Heart right ventricle (tissue), 16 donors: ENCODE measurements at regions of chr2 and their contacts with region 1.

Region 1: GRCh38 chr2:95402370-95403203 is at the start of gene FAHD2A:
- DNase-seq: peak; percentile 97 to 98
- ATAC-seq: peak; percentile 97 to 99 (median 98)
- H3K4me3 ChIP-seq: peak within 1 kb of the TSS; percentile 71 to 99 (median 93)
- H3K27ac ChIP-seq: peak within 1 kb of the TSS in 9 of 10 donors; percentile 76 to 94 (median 86)
- H3K4me1 ChIP-seq: peaks cover 0 to 31% (median 19%) of the 10 kb centered on the region in 9 donors
- H3K27me3 ChIP-seq: no peaks in the 10 kb centered on the region
- CTCF ChIP-seq: no peak
- total RNA-seq, gene FAHD2A: 24.1 to 45.1 (median 39.8) TPM

Region 2: DNA sequence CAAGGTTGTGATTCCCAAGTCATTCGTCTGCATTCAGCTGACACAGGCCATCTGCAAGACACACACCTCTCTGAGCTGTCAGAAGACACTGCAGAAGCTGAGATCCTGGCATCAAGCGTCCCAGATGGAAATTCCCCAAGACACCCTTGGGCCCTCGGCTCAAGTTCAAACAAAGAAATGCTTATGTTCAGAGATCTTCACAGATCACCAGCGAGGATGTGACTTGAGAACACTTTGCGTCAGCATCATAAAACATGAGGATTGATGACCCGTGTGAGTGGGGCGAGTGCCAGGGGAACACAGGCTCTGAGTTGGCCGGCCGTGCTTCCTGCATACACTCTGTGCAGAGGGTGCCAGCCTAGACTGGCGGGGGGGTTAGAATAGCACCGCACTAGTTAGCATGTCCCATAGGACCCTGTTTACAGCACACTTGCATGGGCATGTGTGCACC is 68.7 kb before region 1 on chr2:
- intact Hi-C with region 1: no loop called
- DNase-seq: peak in 1 of 2 donors; percentile 9
- ATAC-seq: no peak
- H3K4me3 ChIP-seq: no peak overlapping the region
- H3K27ac ChIP-seq: no peak overlapping the region
- H3K4me1 ChIP-seq: peaks cover 0 to 6% (median 0%) of the 10 kb centered on the region in 9 donors
- H3K27me3 ChIP-seq: peaks cover 0 to 9% (median 0%) of the 10 kb centered on the region in 7 donors
- CTCF ChIP-seq: no peak

Region 3: DNA sequence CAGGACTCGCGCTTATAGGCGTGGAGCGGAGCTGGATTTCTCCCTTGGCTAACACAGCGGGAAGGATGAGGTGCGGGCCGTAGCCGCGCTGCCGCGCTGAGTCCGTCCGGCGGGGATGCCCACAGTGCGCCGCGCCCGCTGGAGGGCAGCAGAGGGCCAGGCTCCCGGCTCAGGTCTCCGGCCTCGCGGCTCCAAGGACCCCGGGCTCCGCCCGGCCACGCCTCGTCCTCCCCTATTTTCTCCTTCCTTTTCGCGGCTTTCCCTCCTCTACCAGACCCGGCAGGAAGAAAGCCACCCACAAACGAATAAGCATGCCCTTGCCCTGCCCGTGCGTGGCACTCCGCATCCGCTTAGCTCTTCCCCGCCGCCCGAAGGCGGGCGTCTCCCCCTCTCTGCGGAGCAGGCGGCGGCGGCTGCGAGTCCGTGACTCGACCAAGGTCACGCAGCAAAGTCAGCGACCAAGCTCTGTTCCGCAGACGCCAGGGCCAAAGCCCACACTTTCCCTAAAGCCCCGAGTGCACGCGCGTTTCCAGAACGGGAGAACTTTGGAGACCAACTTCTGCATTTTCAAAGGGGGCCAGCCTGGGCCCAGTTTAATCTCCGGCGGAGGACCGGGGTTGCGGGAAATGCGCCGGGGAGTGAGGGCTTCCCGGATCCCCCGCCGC is 56.9 kb before region 1 on chr2:
- intact Hi-C with region 1: loop called in 2 of 10 experiments (anchors 5 kb)
- DNase-seq: peak; percentile 76 to 90
- ATAC-seq: peak; percentile 90 to 95 (median 92)
- H3K4me3 ChIP-seq: peak overlapping the region; percentile 46 to 77 (median 66)
- H3K27ac ChIP-seq: peak overlapping the region; percentile 60 to 88 (median 78)
- H3K4me1 ChIP-seq: peaks cover 0 to 23% (median 11%) of the 10 kb centered on the region in 9 donors
- H3K27me3 ChIP-seq: peaks cover 0 to 61% (median 17%) of the 10 kb centered on the region in 7 donors
- CTCF ChIP-seq: peak; percentile 83 to 96 (median 93)

Region 4: GRCh38 chr2:95353613-95354468 is 48.7 kb before region 1 on chr2:
- intact Hi-C with region 1: loop called in 2 of 10 experiments (anchors 5 kb)
- DNase-seq: no peak
- ATAC-seq: no peak
- H3K4me3 ChIP-seq: no peak overlapping the region
- H3K27ac ChIP-seq: no peak overlapping the region
- H3K4me1 ChIP-seq: no peaks in the 10 kb centered on the region
- H3K27me3 ChIP-seq: peaks cover 0 to 3% (median 0%) of the 10 kb centered on the region in 7 donors
- CTCF ChIP-seq: no peak

Region 5: GRCh38 chr2:95728878-95729596 is 326.4 kb after region 1 on chr2:
- intact Hi-C with region 1: loop called in 2 of 10 experiments (anchors 5 kb)
- DNase-seq: peak; percentile 25 to 63
- ATAC-seq: peak; percentile 81 to 96 (median 92)
- H3K4me3 ChIP-seq: no peak overlapping the region
- H3K27ac ChIP-seq: no peak overlapping the region
- H3K4me1 ChIP-seq: peaks cover 0 to 3% (median 0%) of the 10 kb centered on the region in 9 donors
- H3K27me3 ChIP-seq: peaks cover 0 to 9% (median 0%) of the 10 kb centered on the region in 7 donors
- CTCF ChIP-seq: peak; percentile 38 to 80 (median 69)